ENCODE measurements at regions of chr2 and their contacts with region 1.

Region 1: GRCh38 chr2:96407041-96407918 is 71.7 kb downstream of the NCAPH start:
- DNase-seq: peak; percentile 33
- H3K4me3 ChIP-seq: no peak overlapping the region
- CTCF ChIP-seq: peak; percentile 84

Region 2: GRCh38 chr2:96427917-96428316 is 20.6 kb after region 1 on chr2:
- CTCF ChIA-PET with region 1: interaction called, 20 read pairs
- POLR2A ChIA-PET with region 1: no interaction called
- DNase-seq: peak; percentile 28
- H3K4me3 ChIP-seq: no peak overlapping the region
- CTCF ChIP-seq: no peak

Region 3: GRCh38 chr2:96449637-96450036 is 42.4 kb after region 1 on chr2:
- CTCF ChIA-PET with region 1: interaction called, 10 read pairs
- POLR2A ChIA-PET with region 1: no interaction called
- DNase-seq: no peak
- H3K4me3 ChIP-seq: no peak overlapping the region
- CTCF ChIP-seq: no peak

Region 4: GRCh38 chr2:96527286-96528005 is 120.2 kb after region 1 on chr2:
- CTCF ChIA-PET with region 1: interaction called, 10 read pairs
- POLR2A ChIA-PET with region 1: no interaction called
- DNase-seq: no peak
- H3K4me3 ChIP-seq: peak overlapping the region; percentile 47
- CTCF ChIP-seq: peak; percentile 65

Region 5: GRCh38 chr2:96554293-96555145 is 147.2 kb after region 1 on chr2:
- CTCF ChIA-PET with region 1: interaction called, 76 read pairs
- POLR2A ChIA-PET with region 1: no interaction called
- DNase-seq: no peak
- H3K4me3 ChIP-seq: no peak overlapping the region
- CTCF ChIP-seq: peak; percentile 96

Measured in AG04449 (cell line).